H1 (cell line): ENCODE measurements at regions of chr6 and their contacts with region 1.

Region 1: DNA sequence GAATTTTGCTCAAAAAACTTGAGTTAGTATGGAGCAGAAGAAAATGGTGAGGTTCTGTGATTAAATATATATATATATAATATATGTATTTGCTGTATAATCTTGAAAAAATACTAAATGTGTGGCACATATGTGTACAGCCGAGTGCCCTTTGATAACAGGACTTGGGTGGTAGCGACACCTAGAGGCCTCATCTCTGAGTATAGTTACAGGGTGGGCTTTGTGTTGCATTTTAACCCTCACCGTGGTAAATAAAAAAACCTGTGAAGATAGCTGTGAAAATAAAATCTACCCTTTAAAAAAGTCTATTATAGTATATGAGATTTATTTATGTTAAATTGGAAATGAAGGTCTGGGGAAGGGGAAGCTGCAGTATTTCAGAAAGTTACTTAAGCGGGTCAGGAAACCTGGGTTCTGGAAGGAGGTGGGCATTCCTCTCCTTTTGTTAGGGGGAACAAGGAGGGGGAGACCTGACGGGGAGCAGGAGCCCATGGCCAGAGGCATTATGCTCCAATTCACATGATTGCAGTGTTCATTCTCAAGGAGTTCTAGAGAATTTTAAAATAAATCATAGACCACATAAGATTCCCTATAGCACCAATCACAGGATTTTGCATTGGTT is 82.7 kb downstream of the SH3BGRL2 start:
- DNase-seq: peak in 1 of 2 experiments; percentile 63
- H3K4me3 ChIP-seq: peak overlapping the region in 1 of 4 experiments; percentile 36; a peak in 1 of 8 replicates
- H3K27ac ChIP-seq: no peak overlapping the region
- H3K4me1 ChIP-seq: peaks cover 5 to 11% (median 7%) of the 10 kb centered on the region in 4 experiments
- H3K27me3 ChIP-seq: no peaks in the 10 kb centered on the region
- CTCF ChIP-seq: peak; percentile 33 to 60 (median 59)
- EP300 ChIP-seq: no peak
- POLR2A ChIP-seq: no peak
- RAD21 ChIP-seq: peak; percentile 76 to 80

Region 2: DNA sequence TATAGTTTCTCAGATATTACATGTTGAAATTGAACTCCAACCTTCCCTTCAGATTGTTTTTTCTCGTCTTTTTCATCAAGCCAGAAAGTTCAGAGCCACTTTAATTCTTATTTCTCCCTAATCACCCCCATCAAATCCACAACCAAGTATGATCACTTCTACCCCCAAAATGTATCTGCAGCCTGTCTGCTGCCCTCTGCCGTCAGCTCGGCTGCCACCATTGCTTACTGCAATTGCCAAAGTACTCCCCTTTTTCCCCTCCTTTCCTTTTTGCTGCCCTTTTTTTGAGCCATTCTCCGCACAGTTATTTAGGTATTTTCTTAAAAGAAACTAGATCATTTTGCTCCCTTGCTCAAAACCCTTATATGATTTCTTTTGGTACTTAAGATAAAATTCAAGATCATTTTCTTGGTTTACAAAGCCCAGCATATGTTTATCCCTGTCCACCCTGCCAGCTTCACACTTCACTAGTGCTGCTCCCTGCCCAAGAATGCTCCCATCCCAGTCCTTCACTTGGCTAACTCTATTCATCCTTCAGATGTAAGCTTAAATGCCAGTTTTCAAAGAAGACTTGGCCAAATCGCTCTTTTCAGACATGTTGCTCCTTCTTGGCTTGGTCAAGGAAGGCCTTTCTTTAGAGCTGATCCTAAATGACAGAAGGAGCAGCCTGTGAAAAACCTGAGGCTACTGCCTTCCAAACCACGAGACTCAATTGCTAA is 19.0 kb before region 1 on chr6:
- CTCF ChIA-PET with region 1: interaction called, 27 read pairs
- POLR2A ChIA-PET with region 1: no interaction called
- DNase-seq: no peak
- H3K4me3 ChIP-seq: no peak overlapping the region
- H3K27ac ChIP-seq: no peak overlapping the region
- H3K4me1 ChIP-seq: peaks cover 0 to 2% (median under 1%) of the 10 kb centered on the region in 4 experiments; a peak in 2 of 7 replicates
- H3K27me3 ChIP-seq: no peaks in the 10 kb centered on the region
- CTCF ChIP-seq: peak; percentile 52 to 77 (median 71)
- EP300 ChIP-seq: no peak
- POLR2A ChIP-seq: no peak
- RAD21 ChIP-seq: peak; percentile 53 to 59

Region 3: DNA sequence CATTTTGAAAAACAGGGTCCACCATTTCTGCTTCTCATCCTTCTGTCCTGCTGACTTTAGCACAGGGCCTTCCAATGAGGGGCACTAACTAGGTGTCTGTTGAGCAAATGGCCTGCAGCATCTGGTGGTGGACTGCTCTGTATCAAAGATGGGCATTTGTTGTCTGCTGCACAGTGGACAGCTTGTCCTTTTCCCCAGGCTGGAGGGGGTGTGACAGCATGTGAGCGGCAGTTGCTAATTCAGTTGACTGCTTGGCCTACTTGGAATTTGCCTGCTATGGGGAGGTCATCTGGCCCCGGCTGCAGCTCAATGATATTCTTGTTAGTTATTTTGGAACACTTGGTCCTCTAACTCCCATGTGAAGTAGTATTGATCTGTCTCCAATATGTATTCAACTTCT is 11.0 kb after region 1 on chr6:
- CTCF ChIA-PET with region 1: interaction called, 11 read pairs
- POLR2A ChIA-PET with region 1: no interaction called
- DNase-seq: no peak
- H3K4me3 ChIP-seq: no peak overlapping the region
- H3K27ac ChIP-seq: no peak overlapping the region
- H3K4me1 ChIP-seq: no peaks in the 10 kb centered on the region
- H3K27me3 ChIP-seq: no peaks in the 10 kb centered on the region; a peak in 1 of 7 replicates
- CTCF ChIP-seq: no peak
- EP300 ChIP-seq: no peak
- POLR2A ChIP-seq: no peak
- RAD21 ChIP-seq: no peak